B cell (primary cell): ENCODE measurements at regions of chr1 and their contacts with region 1.

Region 1: DNA sequence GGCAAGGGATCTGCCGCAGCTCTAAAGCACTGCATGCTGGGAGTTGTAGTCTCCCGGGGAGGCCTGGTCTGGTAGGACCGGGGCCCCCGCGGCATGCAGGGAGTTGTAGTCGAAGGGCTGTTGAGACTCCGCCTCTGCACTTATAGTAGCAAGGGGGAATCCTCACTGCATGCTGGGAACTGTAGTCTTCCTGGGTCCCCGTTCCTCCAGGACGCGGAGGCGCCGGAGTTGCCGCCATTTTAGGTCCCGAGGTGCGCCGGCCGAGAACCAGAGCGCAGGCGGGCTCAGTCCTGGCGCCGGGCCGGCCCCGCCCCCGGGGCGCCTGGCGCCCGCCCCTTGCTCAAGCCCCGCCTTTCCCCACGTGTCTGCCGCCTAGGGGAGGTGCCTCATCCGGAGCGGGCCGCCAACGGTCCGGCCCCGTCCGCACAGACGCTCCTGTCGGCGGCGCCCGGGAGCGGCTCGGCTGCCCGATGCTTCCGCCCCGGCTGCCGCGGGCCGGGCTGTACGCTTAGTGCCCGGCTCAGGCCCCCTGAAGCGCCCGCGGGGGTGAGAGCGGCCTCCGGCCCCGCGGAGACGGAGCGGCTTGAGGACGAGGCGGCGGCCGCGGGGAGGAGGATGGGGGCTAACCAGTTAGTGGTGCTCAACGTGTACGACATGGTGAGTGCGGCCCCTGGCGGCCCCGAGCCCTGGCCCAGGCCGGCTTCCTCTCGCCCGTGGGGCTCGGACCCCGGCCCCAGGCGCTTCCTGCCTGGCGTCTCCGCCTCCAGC is at the start of gene DESI2:
- DNase-seq: peak; percentile 99
- ATAC-seq: peak; percentile 87
- H3K4me3 ChIP-seq: peak within 1 kb of the TSS; percentile 51 to 91 (median 81)
- H3K4me3 Mint-ChIP-seq: no peak within 1 kb of the TSS
- H3K27ac ChIP-seq: peak within 1 kb of the TSS; percentile 64 to 88
- H3K27ac Mint-ChIP-seq: peak within 1 kb of the TSS; percentile 93
- H3K4me1 ChIP-seq: peaks cover 23 to 24% of the 10 kb centered on the region in 2 donors
- H3K4me1 Mint-ChIP-seq: peaks cover 20% of the 10 kb centered on the region
- H3K27me3 ChIP-seq: no peaks in the 10 kb centered on the region
- H3K27me3 Mint-ChIP-seq: no peaks in the 10 kb centered on the region
- CTCF ChIP-seq: peak; percentile 65
- total RNA-seq, gene DESI2: 25.2 and 25.9 TPM in 2 replicates

Region 2: GRCh38 chr1:243850452-243851256 is 802.2 kb before region 1 on chr1:
- CTCF ChIA-PET with region 1: no interaction called
- POLR2A ChIA-PET with region 1: no interaction called
- intact Hi-C with region 1: loop called (anchors 5 kb)
- DNase-seq: peak; percentile 88
- ATAC-seq: peak; percentile 45
- H3K4me3 ChIP-seq: peak overlapping the region; percentile 70 to 82 (median 76)
- H3K4me3 Mint-ChIP-seq: peak overlapping the region; percentile 92
- H3K27ac ChIP-seq: peak overlapping the region; percentile 87 to 98
- H3K27ac Mint-ChIP-seq: peak overlapping the region; percentile 96
- H3K4me1 ChIP-seq: peaks cover 13 to 14% of the 10 kb centered on the region in 2 donors
- H3K4me1 Mint-ChIP-seq: peaks cover 35% of the 10 kb centered on the region
- H3K27me3 ChIP-seq: peaks cover 0 to 3% (median 0%) of the 10 kb centered on the region in 4 experiments
- H3K27me3 Mint-ChIP-seq: peaks cover 15% of the 10 kb centered on the region
- CTCF ChIP-seq: no peak

Region 3: DNA sequence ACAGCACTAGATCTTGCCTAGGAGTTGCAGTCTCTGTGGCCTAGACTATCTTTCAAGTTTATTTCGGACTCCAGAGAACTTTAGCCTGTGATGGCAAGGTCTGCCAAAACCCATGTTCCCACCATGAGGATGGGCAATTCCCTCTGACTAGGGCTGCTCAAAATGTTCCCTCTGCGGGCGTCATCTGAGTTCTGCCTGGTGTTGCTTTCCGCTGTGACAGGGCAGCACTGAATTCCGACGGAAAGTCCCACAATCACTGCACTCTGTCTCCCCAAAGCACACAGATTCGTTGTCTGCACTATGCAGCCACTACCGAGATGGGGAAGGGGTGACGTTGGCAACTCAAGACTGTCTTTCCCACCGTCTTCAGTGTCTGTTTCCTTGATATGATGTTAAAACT is 116.6 kb before region 1 on chr1:
- CTCF ChIA-PET with region 1: no interaction called
- POLR2A ChIA-PET with region 1: no interaction called
- intact Hi-C with region 1: no loop called
- DNase-seq: no peak
- ATAC-seq: no peak
- H3K4me3 ChIP-seq: no peak overlapping the region
- H3K4me3 Mint-ChIP-seq: no peak overlapping the region
- H3K27ac ChIP-seq: no peak overlapping the region
- H3K27ac Mint-ChIP-seq: no peak overlapping the region
- H3K4me1 ChIP-seq: no peaks in the 10 kb centered on the region
- H3K4me1 Mint-ChIP-seq: no peaks in the 10 kb centered on the region
- H3K27me3 ChIP-seq: no peaks in the 10 kb centered on the region
- H3K27me3 Mint-ChIP-seq: no peaks in the 10 kb centered on the region
- CTCF ChIP-seq: no peak

Region 4: DNA sequence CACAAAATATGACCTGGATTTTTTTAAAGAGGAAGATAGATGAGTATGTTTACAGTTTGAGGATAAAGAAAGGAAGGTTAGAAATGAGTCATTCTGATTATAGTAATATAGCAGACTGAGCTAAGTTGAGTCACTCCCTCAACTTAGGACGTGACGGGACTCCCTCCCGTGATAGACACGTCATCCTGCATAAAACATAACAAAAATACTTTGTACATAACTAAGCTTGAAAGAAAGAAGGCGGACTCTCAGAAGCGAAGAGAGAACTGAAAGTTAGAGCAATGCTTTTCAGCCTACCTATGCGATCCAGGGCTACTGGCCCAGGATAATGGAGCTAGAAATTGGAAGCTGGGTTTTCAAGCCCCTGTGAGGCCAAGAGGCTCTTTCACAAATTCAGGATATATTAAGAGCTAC is 52.9 kb before region 1 on chr1:
- CTCF ChIA-PET with region 1: interaction called, 7 read pairs
- POLR2A ChIA-PET with region 1: no interaction called
- intact Hi-C with region 1: loop called (anchors 5 kb)
- DNase-seq: peak; percentile 29
- ATAC-seq: peak; percentile 89
- H3K4me3 ChIP-seq: no peak overlapping the region
- H3K4me3 Mint-ChIP-seq: peak overlapping the region; percentile 1
- H3K27ac ChIP-seq: no peak overlapping the region
- H3K27ac Mint-ChIP-seq: peak overlapping the region; percentile 76
- H3K4me1 ChIP-seq: no peaks in the 10 kb centered on the region
- H3K4me1 Mint-ChIP-seq: peaks cover 9% of the 10 kb centered on the region
- H3K27me3 ChIP-seq: no peaks in the 10 kb centered on the region
- H3K27me3 Mint-ChIP-seq: no peaks in the 10 kb centered on the region
- CTCF ChIP-seq: no peak

Region 5: DNA sequence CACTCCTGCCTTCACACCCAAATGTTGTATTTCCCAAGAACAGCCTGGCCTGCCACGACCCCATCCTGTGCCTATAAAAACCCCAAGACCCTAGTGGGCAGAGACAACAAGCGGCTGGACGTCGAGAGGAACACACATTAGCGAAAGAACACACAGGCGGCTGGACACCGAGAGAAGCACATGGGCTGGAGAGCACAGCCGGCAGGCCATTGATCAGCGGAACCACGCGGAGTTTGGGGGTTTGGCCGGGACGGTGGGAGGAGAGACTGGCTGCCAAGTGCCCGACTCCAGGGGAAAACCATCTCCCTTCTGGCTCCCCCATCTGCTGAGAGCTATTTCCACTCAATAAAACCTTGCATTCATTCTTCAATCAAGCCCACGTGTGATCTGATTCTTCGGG is 10.4 kb before region 1 on chr1:
- CTCF ChIA-PET with region 1: no interaction called
- POLR2A ChIA-PET with region 1: no interaction called
- intact Hi-C with region 1: no loop called
- DNase-seq: no peak
- ATAC-seq: no peak
- H3K4me3 ChIP-seq: no peak overlapping the region
- H3K4me3 Mint-ChIP-seq: no peak overlapping the region
- H3K27ac ChIP-seq: no peak overlapping the region
- H3K27ac Mint-ChIP-seq: no peak overlapping the region
- H3K4me1 ChIP-seq: no peaks in the 10 kb centered on the region
- H3K4me1 Mint-ChIP-seq: no peaks in the 10 kb centered on the region
- H3K27me3 ChIP-seq: peaks cover 0 to 3% (median 0%) of the 10 kb centered on the region in 4 experiments
- H3K27me3 Mint-ChIP-seq: peaks cover 30% of the 10 kb centered on the region
- CTCF ChIP-seq: no peak

Region 6: DNA sequence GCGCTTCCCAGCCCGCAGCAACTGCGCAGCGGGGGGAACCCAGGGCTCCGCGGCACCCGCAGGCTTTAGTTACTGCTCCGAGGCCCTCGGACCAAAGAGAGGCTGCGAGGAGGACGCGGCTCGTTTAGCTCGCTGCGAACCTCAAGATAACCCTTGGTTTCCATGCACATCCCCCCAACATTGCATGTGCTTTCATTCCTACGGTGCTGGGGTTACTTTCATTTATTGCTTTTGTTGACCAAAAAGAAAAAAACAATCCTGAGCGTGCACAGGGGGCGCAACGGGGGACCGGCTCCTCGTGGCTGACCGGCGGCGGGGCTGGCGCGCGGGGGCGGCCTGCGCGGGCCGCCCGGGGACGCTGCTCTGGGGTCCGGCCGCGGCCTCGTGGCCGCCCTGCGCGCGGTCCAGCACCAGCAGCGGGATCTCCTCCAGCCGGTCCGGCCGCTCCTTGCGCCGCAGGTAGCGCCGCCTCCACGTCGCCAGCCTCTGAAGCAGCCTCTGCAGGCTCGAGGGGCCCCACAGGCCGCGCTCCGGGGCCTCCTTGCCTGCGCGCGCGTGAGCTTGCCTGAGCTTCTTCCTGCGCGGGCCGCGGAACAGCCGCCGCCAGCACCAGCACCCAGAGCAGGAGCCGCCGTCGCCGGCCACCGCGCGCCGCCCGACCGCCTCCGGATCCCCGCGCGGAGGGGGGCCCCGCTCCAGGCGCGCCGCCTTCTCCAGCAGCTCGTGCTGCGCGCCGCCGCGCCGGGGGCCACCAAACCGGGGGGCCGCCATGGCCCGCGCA is 77.5 kb after region 1 on chr1:
- CTCF ChIA-PET with region 1: interaction called, 4 read pairs
- POLR2A ChIA-PET with region 1: no interaction called
- intact Hi-C with region 1: loop called (anchors 1 kb)
- DNase-seq: peak; percentile 67
- ATAC-seq: peak; percentile 56
- H3K4me3 ChIP-seq: peak overlapping the region; percentile 54 to 84 (median 66)
- H3K4me3 Mint-ChIP-seq: peak overlapping the region; percentile 88
- H3K27ac ChIP-seq: peak overlapping the region; percentile 35 to 44
- H3K27ac Mint-ChIP-seq: peak overlapping the region; percentile 90
- H3K4me1 ChIP-seq: peaks cover 18 to 32% of the 10 kb centered on the region in 2 donors
- H3K4me1 Mint-ChIP-seq: peaks cover 24% of the 10 kb centered on the region
- H3K27me3 ChIP-seq: no peaks in the 10 kb centered on the region
- H3K27me3 Mint-ChIP-seq: no peaks in the 10 kb centered on the region
- CTCF ChIP-seq: no peak

Region 7: GRCh38 chr1:244815600-244816099 is 162.8 kb after region 1 on chr1:
- CTCF ChIA-PET with region 1: no interaction called
- POLR2A ChIA-PET with region 1: no interaction called
- intact Hi-C with region 1: loop called (anchors 5 kb)
- DNase-seq: peak; percentile 76
- ATAC-seq: peak; percentile 69
- H3K4me3 ChIP-seq: peak overlapping the region; percentile 47 to 68 (median 55)
- H3K4me3 Mint-ChIP-seq: peak overlapping the region; percentile 82
- H3K27ac ChIP-seq: peak overlapping the region; percentile 10 to 16
- H3K27ac Mint-ChIP-seq: peak overlapping the region; percentile 73
- H3K4me1 ChIP-seq: peaks cover 20 to 28% of the 10 kb centered on the region in 2 donors
- H3K4me1 Mint-ChIP-seq: peaks cover 27% of the 10 kb centered on the region
- H3K27me3 ChIP-seq: no peaks in the 10 kb centered on the region
- H3K27me3 Mint-ChIP-seq: no peaks in the 10 kb centered on the region
- CTCF ChIP-seq: no peak